ENCODE measurements at regions of chr6 and their contacts with region 1.

Region 1: DNA sequence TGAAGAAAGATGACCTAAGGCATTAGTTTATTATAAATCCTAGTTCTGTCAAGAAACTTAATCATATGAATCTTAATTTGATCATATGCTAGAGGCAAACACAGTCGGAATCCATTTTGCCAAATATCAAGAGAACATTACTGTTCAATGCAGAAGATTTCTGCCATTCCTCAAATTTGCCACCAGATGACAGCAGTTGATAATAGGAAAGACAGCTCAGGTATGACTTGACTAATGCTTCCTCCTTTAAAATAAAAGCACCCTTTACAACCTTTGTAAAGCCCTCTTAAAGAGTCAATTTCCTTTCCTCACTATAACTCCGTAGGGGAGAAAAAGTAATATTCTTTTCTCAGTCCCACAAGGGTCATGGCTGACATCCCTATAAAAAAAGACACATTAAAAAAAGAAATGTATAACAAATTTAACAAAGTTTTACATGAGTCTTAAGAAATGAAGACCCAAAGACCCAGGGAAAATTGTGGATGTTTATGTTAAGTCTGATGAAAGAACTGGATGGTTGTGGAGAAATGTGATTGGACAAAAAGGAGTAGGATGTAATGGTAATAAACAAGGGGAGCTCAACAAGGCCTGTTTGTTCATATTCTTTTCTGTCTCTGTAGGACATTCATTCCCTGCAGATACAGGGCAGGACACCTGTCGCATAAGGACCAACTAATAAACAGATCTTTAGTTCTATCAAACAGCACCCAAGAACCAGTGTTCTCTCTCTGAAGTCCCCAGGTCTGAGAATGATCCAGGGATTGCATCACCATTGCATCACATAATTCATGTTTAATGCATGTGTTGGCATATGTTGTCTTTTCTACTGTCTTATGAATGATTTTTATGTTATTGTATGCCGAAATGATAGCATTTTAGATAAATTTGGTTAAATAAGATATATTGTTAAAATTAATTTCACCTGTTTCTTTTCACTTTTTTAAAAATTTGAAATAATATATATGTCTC is 23.0 kb upstream of the IL17A start:
- DNase-seq: no peak
- H3K4me3 Mint-ChIP-seq: no peak overlapping the region
- H3K27ac Mint-ChIP-seq: no peak overlapping the region
- H3K4me1 Mint-ChIP-seq: peaks cover 32% of the 10 kb centered on the region
- H3K27me3 Mint-ChIP-seq: peaks cover 42% of the 10 kb centered on the region

Region 2: GRCh38 chr6:52227495-52227894 is 64.3 kb after region 1 on chr6:
- intact Hi-C with region 1: loop called (anchors 1 kb)
- DNase-seq: peak; percentile 72
- H3K4me3 Mint-ChIP-seq: peak overlapping the region; percentile 2
- H3K27ac Mint-ChIP-seq: peak overlapping the region; percentile 58
- H3K4me1 Mint-ChIP-seq: peaks cover 51% of the 10 kb centered on the region
- H3K27me3 Mint-ChIP-seq: peaks cover 55% of the 10 kb centered on the region

Region 3: DNA sequence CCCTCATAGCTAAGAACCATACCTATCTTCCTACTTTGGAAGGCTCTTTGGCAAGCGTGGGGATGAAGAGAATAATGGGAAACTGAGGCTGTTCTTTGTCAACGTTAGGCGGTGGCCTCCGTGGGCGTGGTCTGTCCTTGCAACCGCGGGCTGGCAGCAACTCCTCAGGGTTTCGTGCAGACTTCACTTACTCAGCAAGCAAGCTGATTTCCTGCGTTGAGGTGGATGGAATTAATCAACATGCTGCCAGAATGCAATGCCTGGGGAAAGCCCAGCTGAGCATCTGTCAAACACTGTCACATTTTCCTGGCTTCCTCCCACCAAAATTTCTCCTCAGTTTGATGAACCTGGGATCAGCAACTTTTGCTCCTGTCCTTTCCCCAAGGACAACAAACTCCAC is 90.3 kb after region 1 on chr6:
- intact Hi-C with region 1: loop called (anchors 2 kb)
- DNase-seq: peak; percentile 19
- H3K4me3 Mint-ChIP-seq: no peak overlapping the region
- H3K27ac Mint-ChIP-seq: no peak overlapping the region
- H3K4me1 Mint-ChIP-seq: peaks cover 32% of the 10 kb centered on the region
- H3K27me3 Mint-ChIP-seq: peaks cover 54% of the 10 kb centered on the region

Region 4: DNA sequence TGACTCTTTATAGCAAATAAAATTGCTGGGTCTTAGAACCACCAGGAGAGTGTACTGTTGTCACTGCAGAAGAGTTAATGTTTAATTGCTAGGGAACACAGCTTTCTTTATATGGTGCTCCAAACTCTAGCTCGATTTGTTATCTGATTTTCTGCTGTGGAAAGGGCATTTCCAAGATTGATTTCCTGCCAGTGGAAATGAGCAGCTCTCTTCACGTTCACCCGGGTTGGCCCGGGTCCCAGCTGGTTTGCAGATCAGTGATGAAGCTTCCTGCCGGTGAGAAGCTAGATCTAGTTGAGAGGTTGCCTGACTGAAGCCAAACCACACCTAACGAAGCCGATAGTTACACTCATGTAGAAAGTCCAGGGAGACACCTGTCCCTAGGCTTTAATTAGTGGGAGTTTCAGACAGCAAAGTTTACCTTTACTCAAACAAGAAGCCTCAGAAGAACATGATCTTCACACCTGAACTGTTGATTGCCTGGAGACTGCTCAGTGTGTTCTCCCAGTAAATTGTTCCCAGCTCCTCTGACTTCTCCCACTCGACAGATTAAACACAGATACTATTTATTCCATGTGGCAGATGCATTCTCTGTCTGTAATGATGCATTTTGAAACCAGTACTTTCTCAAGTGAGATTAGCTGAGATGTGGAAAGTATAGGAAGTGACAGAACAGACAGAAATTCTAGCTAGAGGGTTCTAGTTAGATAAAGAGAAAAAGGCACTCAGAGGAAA is 226.6 kb after region 1 on chr6:
- intact Hi-C with region 1: loop called (anchors 1 kb)
- DNase-seq: peak; percentile 45
- H3K4me3 Mint-ChIP-seq: peak overlapping the region; percentile 66
- H3K27ac Mint-ChIP-seq: peak overlapping the region; percentile 88
- H3K4me1 Mint-ChIP-seq: peaks cover 62% of the 10 kb centered on the region
- H3K27me3 Mint-ChIP-seq: peaks cover 4% of the 10 kb centered on the region

Region 5: GRCh38 chr6:52664186-52664990 is 501.2 kb after region 1 on chr6:
- intact Hi-C with region 1: loop called (anchors 2 kb)
- DNase-seq: peak; percentile 68
- H3K4me3 Mint-ChIP-seq: no peak overlapping the region
- H3K27ac Mint-ChIP-seq: no peak overlapping the region
- H3K4me1 Mint-ChIP-seq: peaks cover 10% of the 10 kb centered on the region
- H3K27me3 Mint-ChIP-seq: no peaks in the 10 kb centered on the region

Measured in activated T-helper 1 cell treated with anti-CD3 and anti-CD28 coated beads, Interleukin-12 subunit alpha, Interleukin-12 subunit beta, Interleukin-2, Interleukin-4 antibody, amounts not matched to agents 30 ng/mL and 10 ng/mL and 1 ng/mL, durations not matched to agents 14 hours and 24 hours and 36 hours (primary cell).